Vagina (tissue), 2 donors: ENCODE measurements at regions of chr17 and their contacts with region 1.

Region 1: GRCh38 chr17:16285957-16286640 is 67.2 kb downstream of the CENPV start:
- DNase-seq: peak in 1 of 2 donors; percentile 97
- H3K4me3 ChIP-seq: peak overlapping the region; percentile 20 to 26
- H3K27ac ChIP-seq: peak overlapping the region; percentile 95
- H3K4me1 ChIP-seq: peaks cover 35% of the 10 kb centered on the region
- H3K27me3 ChIP-seq: no peaks in the 10 kb centered on the region
- CTCF ChIP-seq: no peak
- POLR2A ChIP-seq: peak in 1 of 2 donors; percentile 55

Region 2: DNA sequence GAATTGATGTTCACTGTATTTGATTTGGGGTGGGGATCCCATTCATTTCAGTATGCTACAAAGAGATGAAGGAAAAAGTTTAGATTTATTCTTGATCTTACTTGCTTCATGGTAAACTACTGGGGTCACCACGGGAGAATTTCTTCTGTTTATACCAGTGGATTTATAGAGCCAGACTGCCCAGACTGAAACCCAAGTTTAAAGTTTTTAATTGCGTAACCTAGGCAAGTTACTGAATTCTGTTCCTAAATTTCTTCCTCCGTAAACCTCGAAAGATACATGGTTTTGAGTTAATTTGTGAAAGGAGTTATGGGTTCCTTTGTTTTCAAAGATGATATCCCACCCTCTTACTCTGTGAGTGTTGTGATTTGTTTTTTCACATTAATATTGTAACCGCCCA is 42.7 kb before region 1 on chr17:
- intact Hi-C with region 1: no loop called
- DNase-seq: no peak
- H3K4me3 ChIP-seq: no peak overlapping the region
- H3K27ac ChIP-seq: no peak overlapping the region
- H3K4me1 ChIP-seq: no peaks in the 10 kb centered on the region
- H3K27me3 ChIP-seq: no peaks in the 10 kb centered on the region
- CTCF ChIP-seq: no peak
- POLR2A ChIP-seq: no peak

Region 3: DNA sequence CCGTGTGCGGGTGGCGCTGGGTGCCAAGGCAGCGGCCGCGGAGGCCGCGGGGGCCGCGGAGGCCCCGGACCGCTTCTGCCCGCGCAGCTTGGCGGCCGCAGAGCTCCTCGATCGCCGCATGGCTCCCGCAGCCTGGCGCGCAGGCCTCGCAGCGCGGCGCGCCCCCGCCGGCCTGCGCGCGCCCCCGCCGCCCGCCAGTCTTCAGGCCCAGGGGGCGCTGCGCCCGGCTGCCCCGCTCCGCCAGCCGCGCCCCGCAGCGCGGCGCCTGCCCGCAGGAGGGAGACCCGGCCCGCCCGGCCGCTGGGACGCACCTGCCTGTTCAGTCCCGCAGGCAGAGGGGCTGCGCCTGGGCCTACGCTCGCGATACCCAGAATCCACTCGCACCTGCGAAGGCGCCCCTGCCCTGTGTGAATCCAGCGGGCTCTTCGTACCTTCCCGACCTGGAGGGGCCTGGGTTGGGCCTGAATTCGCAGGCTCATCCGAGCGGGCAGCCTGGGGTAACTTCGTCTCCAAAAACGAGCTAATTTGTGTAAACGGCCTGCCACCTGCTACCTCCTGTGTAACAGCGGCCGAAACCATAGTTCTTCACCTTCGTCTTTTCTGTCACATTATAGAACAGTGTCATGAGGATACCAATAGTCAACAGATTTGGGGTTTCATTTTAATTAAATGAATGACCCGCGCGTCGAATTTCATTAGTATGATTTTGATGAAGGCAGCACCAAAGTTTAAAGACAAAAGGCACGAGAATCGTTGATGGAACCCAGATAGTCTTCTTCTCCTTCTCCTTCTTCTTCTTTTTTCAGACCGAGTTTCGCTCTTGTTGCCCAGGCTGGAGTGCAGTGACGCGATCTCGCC is 67.4 kb after region 1 on chr17 and contains the start of gene CENPV:
- intact Hi-C with region 1: loop called (anchors 5 kb)
- DNase-seq: no peak
- H3K4me3 ChIP-seq: peak within 1 kb of the TSS; percentile 63 to 68
- H3K27ac ChIP-seq: peak within 1 kb of the TSS; percentile 66
- H3K4me1 ChIP-seq: peaks cover 18% of the 10 kb centered on the region
- H3K27me3 ChIP-seq: no peaks in the 10 kb centered on the region
- CTCF ChIP-seq: no peak
- POLR2A ChIP-seq: peak in 1 of 2 donors; percentile 2
- total RNA-seq, gene CENPV: 4.2 TPM

Region 4: DNA sequence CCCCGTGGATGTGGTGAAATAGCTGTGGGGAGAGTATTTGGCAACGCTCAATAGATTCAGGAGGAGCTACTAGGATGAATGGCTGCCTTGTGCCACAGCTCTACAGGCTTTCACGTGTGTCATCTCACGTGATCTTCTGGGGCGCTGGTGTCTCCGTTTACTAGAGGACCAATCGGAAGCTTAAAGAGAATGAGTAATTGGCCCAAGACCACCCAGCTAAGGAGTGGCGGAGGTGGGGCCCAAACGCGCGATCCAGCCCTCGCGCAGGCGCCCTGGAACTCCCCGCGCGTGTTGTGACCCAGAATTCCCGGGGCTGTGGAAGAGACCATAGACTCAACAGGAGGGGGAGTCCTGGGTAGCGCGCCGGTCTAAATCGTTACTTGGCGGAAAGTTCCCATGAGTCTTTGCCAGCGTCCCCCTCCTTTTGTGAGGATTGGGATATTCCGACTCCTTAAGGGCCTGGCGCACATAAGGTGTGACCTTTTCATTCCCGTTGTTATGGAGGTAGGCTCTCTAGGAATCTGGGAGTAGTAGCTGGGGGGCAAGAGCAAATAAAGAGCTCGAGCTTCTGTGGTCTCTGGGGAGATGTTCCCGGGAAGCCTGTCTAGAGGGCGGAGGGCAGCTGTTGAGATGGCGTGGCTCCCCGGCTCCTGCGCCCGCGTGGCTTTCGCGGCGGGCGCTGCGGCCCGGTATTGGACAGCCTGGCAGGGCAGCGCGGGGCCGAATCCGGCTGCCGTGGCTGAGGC is 152.6 kb after region 1 on chr17:
- intact Hi-C with region 1: loop called (anchors 10 kb)
- DNase-seq: peak in 1 of 2 donors; percentile 99
- H3K4me3 ChIP-seq: peak overlapping the region; percentile 74 to 95
- H3K27ac ChIP-seq: peak overlapping the region; percentile 94
- H3K4me1 ChIP-seq: peaks cover 53% of the 10 kb centered on the region
- H3K27me3 ChIP-seq: no peaks in the 10 kb centered on the region
- CTCF ChIP-seq: peak in 1 of 3 experiments; percentile 20
- POLR2A ChIP-seq: peak in 1 of 2 donors; percentile 58

Region 5: DNA sequence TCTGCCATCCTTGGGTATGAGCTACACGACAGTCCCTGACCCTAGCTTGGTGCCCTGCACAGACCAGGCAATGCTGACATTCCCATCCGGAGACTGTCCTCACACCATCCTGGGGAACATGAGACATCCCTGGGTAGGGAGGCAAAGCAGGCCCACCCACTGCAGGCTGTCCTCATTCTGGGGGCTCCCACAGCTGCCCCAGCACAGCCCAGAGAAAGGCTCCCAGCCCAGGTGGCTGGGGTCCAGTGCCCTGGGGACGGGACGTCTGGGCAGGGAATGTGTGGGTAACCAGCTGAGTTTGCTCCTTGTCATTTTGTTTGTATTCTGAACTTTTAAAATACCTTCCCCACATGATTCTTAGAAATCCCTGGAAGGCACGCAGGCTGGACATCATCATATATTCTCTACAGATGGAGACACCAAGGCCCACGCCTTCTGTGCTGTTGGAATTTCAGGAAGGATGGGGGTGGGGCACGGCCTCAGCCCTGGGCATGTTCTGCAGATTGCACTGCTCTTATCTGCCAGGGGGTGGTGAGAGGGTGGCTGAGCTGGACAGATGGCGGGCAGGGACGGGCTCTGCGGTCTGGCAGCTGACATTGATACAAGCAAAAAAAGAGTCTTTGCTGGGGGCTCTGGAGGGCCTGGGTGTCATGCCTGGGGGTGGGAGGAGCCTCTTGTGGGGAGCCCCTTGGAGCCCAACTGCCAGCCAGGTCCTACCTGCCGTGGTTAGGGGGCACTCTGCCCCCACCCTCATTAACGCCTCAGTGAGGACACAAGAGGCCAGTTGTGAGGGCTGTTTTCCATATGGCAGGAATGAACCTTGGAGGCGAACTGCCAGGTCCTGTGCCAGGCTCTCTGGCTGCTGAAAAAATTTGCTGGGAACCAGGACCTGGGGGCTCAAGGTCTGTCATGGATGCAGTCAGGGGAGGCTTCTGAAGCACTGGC is 177.5 kb after region 1 on chr17:
- intact Hi-C with region 1: no loop called
- DNase-seq: no peak
- H3K4me3 ChIP-seq: no peak overlapping the region
- H3K27ac ChIP-seq: no peak overlapping the region
- H3K4me1 ChIP-seq: peaks cover 20% of the 10 kb centered on the region
- H3K27me3 ChIP-seq: no peaks in the 10 kb centered on the region
- CTCF ChIP-seq: no peak
- POLR2A ChIP-seq: no peak